PC-9 (cell line): ENCODE measurements at regions of chr17 and their contacts with region 1.

Region 1: DNA sequence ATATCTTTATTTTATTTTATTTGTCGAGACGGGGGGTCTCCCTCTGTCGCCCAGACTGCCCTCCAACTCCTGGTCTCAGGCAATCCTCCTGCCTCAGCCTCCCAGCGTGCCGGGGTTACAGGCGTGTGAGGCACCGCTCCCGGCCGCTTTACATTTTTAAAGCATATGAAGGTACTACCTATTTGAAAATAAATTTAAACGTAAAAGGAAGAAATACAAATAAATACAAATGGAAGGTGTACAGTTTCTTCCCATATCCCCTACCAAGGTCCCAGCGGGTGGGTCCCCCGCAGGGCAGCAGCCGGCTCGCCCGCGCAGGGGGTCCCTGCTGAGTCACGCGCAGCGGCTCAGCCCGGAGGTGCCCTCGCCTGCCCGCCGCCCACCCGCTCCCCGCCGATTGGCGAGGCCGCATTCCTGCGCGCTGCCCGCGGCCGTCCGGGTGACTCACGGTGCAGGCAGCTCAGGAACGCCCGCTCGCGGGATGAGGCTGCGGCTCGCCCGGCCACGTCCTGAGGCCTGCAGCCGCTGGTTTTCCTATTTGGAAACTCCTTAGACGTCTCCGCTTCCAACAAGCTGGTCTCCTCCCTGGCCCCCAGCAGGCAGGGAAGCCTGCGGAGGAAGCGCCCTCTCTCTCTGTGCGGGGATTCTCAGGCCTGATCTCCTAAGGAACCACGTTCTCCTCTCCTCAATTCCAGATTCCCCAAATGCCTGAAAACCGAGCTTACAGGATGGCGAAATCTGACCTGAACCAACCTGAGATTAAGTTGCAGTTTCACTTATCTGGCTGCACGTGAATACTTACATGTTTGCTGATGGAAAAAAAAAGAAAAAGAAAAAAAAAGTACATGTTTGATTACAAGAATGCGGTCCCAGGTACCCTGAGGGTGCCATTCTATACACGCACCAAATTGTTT is 54.9 kb upstream of the MAP3K14 start:
- DNase-seq: peak; percentile 96 to 97
- H3K4me3 ChIP-seq: peak overlapping the region; percentile 45
- H3K27ac ChIP-seq: peak overlapping the region; percentile 99
- H3K4me1 ChIP-seq: peaks cover 73% of the 10 kb centered on the region
- H3K27me3 ChIP-seq: no peaks in the 10 kb centered on the region
- CTCF ChIP-seq: 0 out of 2 replicates have a peak, but pooled peaks have one; percentile 1

Region 2: GRCh38 chr17:45228763-45229539 is 142.7 kb before region 1 on chr17:
- CTCF ChIA-PET with region 1: no interaction called
- POLR2A ChIA-PET with region 1: interaction called, 15 read pairs
- intact Hi-C with region 1: no loop called
- DNase-seq: peak; percentile 65 to 68
- H3K4me3 ChIP-seq: peak overlapping the region; percentile 3; the same call in 1 of the 2 replicates
- H3K27ac ChIP-seq: peak overlapping the region; percentile 22
- H3K4me1 ChIP-seq: peaks cover 55% of the 10 kb centered on the region
- H3K27me3 ChIP-seq: no peaks in the 10 kb centered on the region
- CTCF ChIP-seq: no peak

Region 3: GRCh38 chr17:45302649-45303173 is 69.0 kb before region 1 on chr17:
- CTCF ChIA-PET with region 1: no interaction called
- POLR2A ChIA-PET with region 1: no interaction called
- intact Hi-C with region 1: no loop called
- DNase-seq: no peak
- H3K4me3 ChIP-seq: no peak overlapping the region
- H3K27ac ChIP-seq: no peak overlapping the region
- H3K4me1 ChIP-seq: peaks cover 11% of the 10 kb centered on the region
- H3K27me3 ChIP-seq: no peaks in the 10 kb centered on the region
- CTCF ChIP-seq: no peak

Region 4: DNA sequence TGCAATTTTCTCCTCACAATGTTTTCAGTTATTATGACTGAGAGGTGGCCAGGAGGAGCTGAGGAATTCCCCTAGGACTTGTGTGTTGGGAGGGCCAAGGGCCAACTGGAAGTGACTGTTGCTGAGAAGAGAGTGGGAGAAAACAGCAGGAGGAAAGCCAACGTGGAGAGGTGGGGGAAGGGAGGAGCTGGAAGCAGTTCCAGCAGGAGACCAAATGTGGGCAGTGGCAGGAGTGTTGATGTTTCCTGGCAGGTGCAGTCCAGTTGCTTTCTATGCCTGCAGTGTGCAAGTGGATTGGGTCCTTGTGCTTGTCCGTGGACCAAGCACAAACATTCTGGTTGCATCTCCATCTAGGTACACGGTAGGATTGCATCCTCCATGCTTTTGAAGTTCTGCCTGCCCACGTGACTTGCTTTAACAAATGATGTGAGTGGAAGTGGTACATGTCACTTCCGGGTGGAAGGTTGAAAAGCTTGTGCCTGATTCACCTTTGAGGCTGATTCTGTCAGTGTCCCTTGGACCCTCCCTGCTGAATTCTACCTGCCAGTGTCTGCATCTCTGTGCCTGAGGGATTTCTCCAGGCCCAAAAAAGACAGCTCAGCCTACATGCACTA is 357.7 kb after region 1 on chr17:
- CTCF ChIA-PET with region 1: no interaction called
- POLR2A ChIA-PET with region 1: no interaction called
- intact Hi-C with region 1: no loop called
- DNase-seq: no peak
- H3K4me3 ChIP-seq: no peak overlapping the region
- H3K27ac ChIP-seq: no peak overlapping the region
- H3K4me1 ChIP-seq: no peaks in the 10 kb centered on the region
- H3K27me3 ChIP-seq: peaks cover 76% of the 10 kb centered on the region
- CTCF ChIP-seq: no peak